ENCODE measurements at regions of chr1 and their contacts with region 1.

Region 1: DNA sequence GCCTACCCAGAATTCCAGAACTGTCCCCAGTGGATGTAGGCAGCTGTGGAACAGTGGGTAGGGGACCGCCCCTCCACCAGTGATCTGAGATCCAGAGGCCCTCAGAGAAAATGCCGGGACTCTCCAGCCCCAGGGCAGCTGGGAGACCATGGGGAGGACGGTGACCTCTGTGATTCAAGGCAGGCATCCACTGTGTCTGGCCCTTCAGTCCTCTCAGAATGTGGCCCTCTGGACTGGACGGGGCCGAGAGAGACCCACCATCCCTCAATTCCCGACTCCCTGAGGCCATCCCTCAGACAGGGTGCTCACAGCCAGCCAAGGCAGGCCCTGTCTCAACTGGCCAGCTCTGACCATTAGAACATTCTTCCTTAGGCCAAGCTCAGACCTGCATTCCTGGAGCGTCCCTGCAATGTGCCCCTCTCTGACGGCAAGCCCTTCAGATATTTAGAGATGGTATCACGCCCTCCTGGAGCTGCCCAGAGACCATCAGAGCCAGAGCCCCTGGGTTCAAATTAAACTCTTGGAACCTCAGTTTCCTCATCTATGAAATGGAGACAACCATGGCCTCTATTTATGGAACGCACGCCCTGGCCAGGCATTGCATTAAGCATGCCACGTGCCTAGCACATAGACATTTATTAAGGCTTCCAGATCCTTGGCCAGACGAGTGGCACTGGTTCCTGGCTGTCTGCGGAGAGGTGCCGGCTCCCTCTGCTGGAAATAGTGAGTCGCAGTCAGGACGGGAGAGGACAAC is 9.6 kb upstream of the EPS8L3 start:
- DNase-seq: peak; percentile 81 to 85 (median 84)
- ATAC-seq: peak; percentile 87
- H3K4me3 ChIP-seq: no peak overlapping the region
- H3K4me1 ChIP-seq: peaks cover 4% of the 10 kb centered on the region
- CTCF ChIP-seq: peak; percentile 81

Region 2: DNA sequence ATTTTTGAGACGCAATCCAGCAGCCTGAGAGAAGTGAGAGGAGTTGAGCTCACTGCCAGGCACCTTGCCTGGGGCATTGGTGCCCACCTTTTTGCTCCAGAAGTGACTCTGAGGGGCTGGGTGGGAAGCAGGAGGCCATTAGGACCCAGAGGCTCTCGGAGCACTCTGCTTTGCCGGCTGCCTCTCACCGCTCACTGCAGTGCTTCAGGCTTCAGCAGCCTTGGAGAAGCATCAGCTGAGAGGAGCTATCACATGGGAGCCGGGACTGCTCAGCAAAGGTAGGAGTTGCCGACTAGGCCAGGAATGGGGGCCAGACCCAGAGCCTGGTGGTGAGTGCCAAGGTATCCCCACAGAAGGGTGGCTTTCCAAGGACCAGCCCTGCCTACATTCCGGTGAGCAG is 233.6 kb before region 1 on chr1 and contains the start of gene GPR61:
- intact Hi-C with region 1: loop called (anchors 5 to 10 kb)
- DNase-seq: no peak
- ATAC-seq: no peak
- H3K4me3 ChIP-seq: no peak within 1 kb of the TSS
- H3K4me1 ChIP-seq: no peaks in the 10 kb centered on the region
- CTCF ChIP-seq: no peak
- total RNA-seq, gene GPR61: 0.25 TPM in 1 of 3 donors, not detected in the others

Region 3: GRCh38 chr1:109643385-109644230 is 129.7 kb before region 1 on chr1:
- intact Hi-C with region 1: loop called (anchors 5 kb)
- DNase-seq: peak; percentile 87 to 94 (median 93)
- ATAC-seq: peak; percentile 94
- H3K4me3 ChIP-seq: no peak overlapping the region
- H3K4me1 ChIP-seq: peaks cover 7% of the 10 kb centered on the region
- CTCF ChIP-seq: peak; percentile 85

Region 4: DNA sequence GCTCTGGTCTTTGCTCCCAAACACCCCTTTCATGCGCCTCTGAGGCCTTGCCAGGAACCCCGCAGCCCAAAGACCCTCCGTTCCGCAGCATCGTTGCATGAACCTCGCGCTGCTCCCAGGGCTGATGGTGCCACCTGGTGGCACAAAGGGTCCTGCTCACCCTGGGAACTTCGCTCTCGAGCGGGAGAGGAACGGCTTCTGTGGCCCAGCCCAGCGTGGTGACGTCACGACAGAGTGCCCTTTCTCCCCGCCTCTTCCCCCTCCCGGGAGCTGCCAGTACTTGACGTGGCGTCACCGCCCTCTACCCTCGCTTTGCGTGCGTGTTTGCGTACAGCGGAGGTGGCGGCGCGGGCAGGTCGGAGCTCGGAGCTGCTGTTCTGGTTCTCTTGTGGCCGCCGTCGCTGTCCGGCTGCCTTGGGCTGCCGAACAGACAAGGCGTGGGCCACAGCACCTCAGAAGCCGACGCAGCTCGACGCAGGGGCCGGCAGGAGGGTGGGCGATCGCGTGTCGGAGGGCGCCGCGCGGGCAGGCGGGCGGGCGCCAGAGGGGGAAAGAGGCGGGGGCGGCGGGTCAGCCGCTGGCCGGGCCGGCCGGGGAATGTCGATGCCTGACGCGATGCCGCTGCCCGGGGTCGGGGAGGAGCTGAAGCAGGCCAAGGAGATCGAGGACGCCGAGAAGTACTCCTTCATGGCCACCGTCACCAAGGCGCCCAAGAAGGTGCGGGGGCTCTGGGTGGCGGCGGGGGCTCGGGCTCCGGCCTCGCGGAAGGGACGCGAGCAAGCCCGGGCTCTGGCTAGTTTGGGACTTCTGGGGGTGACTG is 211.3 kb after region 1 on chr1 and contains the start of gene AHCYL1:
- intact Hi-C with region 1: loop called (anchors 2 to 5 kb)
- DNase-seq: peak; percentile 99 to 100 (median 100)
- ATAC-seq: peak; percentile 98
- H3K4me3 ChIP-seq: peak within 1 kb of the TSS; percentile 75
- H3K4me1 ChIP-seq: peaks cover 40% of the 10 kb centered on the region
- CTCF ChIP-seq: peak; percentile 97
- total RNA-seq, gene AHCYL1: 87.5 to 116 (median 87.8) TPM